Activated CD4-positive, alpha-beta T cell treated with anti-CD3 and anti-CD28 coated beads for 36 hours (primary cell): ENCODE measurements at regions of chr20 and their contacts with region 1.

Region 1: GRCh38 chr20:543369-544152 is at the start of gene CSNK2A1:
- DNase-seq: peak; percentile 97
- ATAC-seq: peak; percentile 97
- H3K4me3 Mint-ChIP-seq: peak within 1 kb of the TSS; percentile 94
- H3K27ac Mint-ChIP-seq: peak within 1 kb of the TSS; percentile 96
- H3K4me1 Mint-ChIP-seq: peaks cover 49% of the 10 kb centered on the region
- H3K27me3 Mint-ChIP-seq: no peaks in the 10 kb centered on the region
- total RNA-seq, gene CSNK2A1: 179 to 254 TPM

Region 2: DNA sequence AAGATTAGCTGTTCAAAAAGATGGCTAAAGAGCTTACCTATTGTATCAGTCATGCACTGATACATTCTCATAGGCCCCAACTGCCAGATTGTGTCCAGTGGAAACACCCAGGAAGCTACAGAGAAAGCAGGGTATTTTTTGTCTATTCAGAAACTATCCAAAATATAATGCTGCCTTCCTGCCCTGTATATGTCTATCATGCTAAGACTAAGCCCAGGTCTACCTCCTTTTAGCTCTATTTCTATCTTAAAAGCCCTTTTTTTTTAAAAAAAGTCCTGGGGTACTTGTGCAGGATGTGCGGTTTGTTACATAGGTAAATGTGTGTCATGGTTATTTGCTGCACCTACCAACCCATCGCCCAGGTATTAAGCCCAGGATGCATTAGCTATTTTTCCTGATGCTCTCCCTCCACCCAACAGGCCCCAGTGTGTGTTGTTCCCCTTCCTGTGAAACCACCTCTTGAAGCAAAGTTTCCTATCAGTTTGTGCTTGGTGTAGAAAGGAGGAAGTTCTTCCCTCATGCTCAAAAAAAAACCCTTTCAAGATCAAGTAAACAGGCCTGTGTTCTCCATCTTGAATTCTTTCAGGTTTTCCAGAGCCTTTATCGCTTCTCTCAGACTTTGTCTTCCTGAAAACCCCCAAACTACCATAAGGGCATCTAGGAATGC is 316.0 kb before region 1 on chr20:
- CTCF ChIA-PET with region 1: no interaction called
- POLR2A ChIA-PET with region 1: no interaction called
- intact Hi-C with region 1: no loop called
- DNase-seq: no peak
- ATAC-seq: peak; percentile 19
- H3K4me3 Mint-ChIP-seq: no peak overlapping the region
- H3K27ac Mint-ChIP-seq: no peak overlapping the region
- H3K4me1 Mint-ChIP-seq: peaks cover 19% of the 10 kb centered on the region
- H3K27me3 Mint-ChIP-seq: no peaks in the 10 kb centered on the region

Region 3: GRCh38 chr20:297098-297924 is 246.2 kb before region 1 on chr20 and contains the start of gene ZCCHC3:
- CTCF ChIA-PET with region 1: no interaction called
- POLR2A ChIA-PET with region 1: no interaction called
- intact Hi-C with region 1: loop called in 1 of 2 experiments (anchors 1 kb)
- DNase-seq: peak; percentile 92
- ATAC-seq: peak; percentile 81
- H3K4me3 Mint-ChIP-seq: peak within 1 kb of the TSS; percentile 100
- H3K27ac Mint-ChIP-seq: peak within 1 kb of the TSS; percentile 99
- H3K4me1 Mint-ChIP-seq: peaks cover 44% of the 10 kb centered on the region
- H3K27me3 Mint-ChIP-seq: no peaks in the 10 kb centered on the region
- total RNA-seq, gene ZCCHC3: 15.6 to 16.4 TPM

Region 4: GRCh38 chr20:347640-348484 is 195.7 kb before region 1 on chr20:
- CTCF ChIA-PET with region 1: no interaction called
- POLR2A ChIA-PET with region 1: no interaction called
- intact Hi-C with region 1: loop called in 1 of 2 experiments (anchors 5 kb)
- DNase-seq: peak; percentile 78
- ATAC-seq: peak; percentile 76
- H3K4me3 Mint-ChIP-seq: peak overlapping the region; percentile 82
- H3K27ac Mint-ChIP-seq: peak overlapping the region; percentile 42
- H3K4me1 Mint-ChIP-seq: peaks cover 10% of the 10 kb centered on the region
- H3K27me3 Mint-ChIP-seq: no peaks in the 10 kb centered on the region

Region 5: DNA sequence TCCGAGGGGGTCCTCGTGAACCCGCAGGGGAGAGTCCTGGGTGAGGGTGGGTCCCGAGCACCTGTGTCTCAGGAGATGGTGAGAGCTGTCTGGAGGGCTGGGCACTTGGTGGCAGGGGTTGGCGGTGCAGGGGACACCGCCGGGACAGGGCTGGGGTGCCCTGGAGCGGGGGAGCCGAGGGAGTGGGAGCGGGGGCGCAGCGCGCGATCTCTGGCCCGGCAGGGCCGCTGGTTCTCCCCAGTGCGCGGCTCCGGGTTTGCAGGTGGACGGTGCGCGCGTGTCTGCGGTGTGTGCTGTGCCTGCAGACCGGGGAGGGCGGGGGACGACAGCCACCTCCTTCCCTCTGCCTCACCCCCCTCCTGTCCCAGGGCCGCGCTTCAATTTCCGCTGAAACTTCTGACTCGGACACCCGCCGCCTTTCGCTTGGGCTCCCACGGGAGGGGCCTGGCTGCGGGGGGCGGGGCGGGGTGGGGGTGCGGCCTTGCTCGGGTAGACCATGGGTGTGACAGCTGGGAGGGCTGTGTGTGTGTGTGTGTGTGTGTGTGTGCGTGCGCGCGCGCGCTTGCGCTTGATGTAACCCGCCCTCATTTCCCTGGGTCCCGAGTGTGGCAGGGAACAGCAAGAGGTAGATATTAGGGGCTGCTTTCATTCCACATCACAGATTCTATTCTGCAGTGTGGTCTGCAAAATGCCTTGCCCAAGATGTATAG is 161.8 kb before region 1 on chr20:
- CTCF ChIA-PET with region 1: interaction called, 3 read pairs
- POLR2A ChIA-PET with region 1: no interaction called
- intact Hi-C with region 1: loop called in 1 of 2 experiments (anchors 1 kb)
- DNase-seq: peak; percentile 88
- ATAC-seq: peak; percentile 70
- H3K4me3 Mint-ChIP-seq: peak overlapping the region; percentile 81
- H3K27ac Mint-ChIP-seq: peak overlapping the region; percentile 83
- H3K4me1 Mint-ChIP-seq: peaks cover 14% of the 10 kb centered on the region
- H3K27me3 Mint-ChIP-seq: no peaks in the 10 kb centered on the region

Region 6: GRCh38 chr20:653110-653589 is 109.6 kb after region 1 on chr20 and contains the start of gene SRXN1:
- CTCF ChIA-PET with region 1: interaction called, 4 read pairs
- POLR2A ChIA-PET with region 1: no interaction called
- intact Hi-C with region 1: loop called in 1 of 2 experiments (anchors 1 kb)
- DNase-seq: peak; percentile 91
- ATAC-seq: peak; percentile 93
- H3K4me3 Mint-ChIP-seq: peak within 1 kb of the TSS; percentile 76
- H3K27ac Mint-ChIP-seq: peak within 1 kb of the TSS; percentile 80
- H3K4me1 Mint-ChIP-seq: peaks cover 24% of the 10 kb centered on the region
- H3K27me3 Mint-ChIP-seq: peaks cover 8% of the 10 kb centered on the region
- total RNA-seq, gene SRXN1: 12.6 to 13.5 TPM

Region 7: DNA sequence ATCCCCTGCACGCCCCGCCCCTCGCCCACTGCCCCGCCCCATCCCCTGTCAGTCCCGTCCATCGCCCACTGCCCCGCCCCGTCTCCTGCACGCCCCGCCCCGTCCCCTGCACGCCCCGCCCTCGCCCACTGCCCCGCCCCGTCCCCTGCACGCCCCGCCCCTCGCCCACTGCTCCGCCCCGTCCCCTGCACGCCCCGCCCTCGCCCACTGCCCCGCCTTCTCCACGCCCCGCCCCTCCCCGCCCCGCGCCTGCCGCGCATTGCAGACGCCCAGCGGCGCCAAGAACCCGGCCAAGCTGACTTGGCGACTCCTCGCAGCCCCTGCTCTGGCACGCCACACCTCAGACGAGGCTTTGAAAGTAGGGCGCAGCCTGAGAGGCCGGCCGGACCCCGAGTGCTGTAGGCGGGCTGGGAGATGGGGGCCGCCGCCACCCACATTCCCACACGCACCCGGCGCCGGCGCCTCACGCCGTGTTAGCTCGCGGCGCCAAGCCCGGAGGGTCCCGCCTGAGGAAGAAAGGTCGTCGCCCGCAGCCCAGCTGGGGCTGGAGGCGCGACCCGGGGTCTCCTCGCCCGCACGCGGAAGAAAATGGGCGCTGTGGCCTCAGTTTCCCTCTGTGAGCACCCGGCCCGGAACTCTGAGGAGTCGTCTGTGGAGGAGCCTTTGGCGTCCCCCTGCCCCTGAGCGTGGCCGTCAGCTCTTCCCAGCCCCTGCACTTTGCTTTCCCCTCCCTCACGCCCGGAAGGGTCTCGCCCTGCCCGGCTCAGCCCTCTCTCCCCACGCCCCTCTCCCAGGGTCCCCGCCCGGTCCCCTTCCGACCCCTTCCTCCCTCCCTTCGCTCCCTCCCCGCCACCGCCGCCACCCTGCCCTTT is 682.5 kb after region 1 on chr20 and contains the start of gene RAD21L1:
- CTCF ChIA-PET with region 1: no interaction called
- POLR2A ChIA-PET with region 1: no interaction called
- intact Hi-C with region 1: loop called in 1 of 2 experiments (anchors 5 kb)
- DNase-seq: peak; percentile 94
- ATAC-seq: peak; percentile 85
- H3K4me3 Mint-ChIP-seq: peak within 1 kb of the TSS; percentile 75
- H3K27ac Mint-ChIP-seq: peak within 1 kb of the TSS; percentile 79
- H3K4me1 Mint-ChIP-seq: peaks cover 11% of the 10 kb centered on the region
- H3K27me3 Mint-ChIP-seq: peaks cover 9% of the 10 kb centered on the region
- total RNA-seq, gene RAD21L1: 0.32 TPM in 1 of 2 experiments, not detected in the other